Naive thymus-derived CD4-positive, alpha-beta T cell (primary cell): ENCODE measurements at regions of chr22 and their contacts with region 1.

Region 1: GRCh38 chr22:38181453-38182247 is at the start of gene PLA2G6:
- DNase-seq: peak; percentile 86 to 99 (median 90)
- ATAC-seq: peak; percentile 96
- H3K4me3 ChIP-seq: peak within 1 kb of the TSS; percentile 90
- H3K4me3 Mint-ChIP-seq: peak within 1 kb of the TSS; percentile 88 to 100 (median 94)
- H3K27ac ChIP-seq: peak within 1 kb of the TSS; percentile 67
- H3K27ac Mint-ChIP-seq: peak within 1 kb of the TSS; percentile 36 to 94 (median 89)
- H3K4me1 ChIP-seq: peaks cover 16 to 30% of the 10 kb centered on the region in 2 donors
- H3K4me1 Mint-ChIP-seq: peaks cover 34 to 50% (median 42%) of the 10 kb centered on the region in 7 donors
- H3K27me3 ChIP-seq: no peaks in the 10 kb centered on the region
- H3K27me3 Mint-ChIP-seq: peaks cover 0 to 14% (median 0%) of the 10 kb centered on the region in 5 donors
- total RNA-seq, gene PLA2G6: 66.5 to 252 (median 105) TPM

Region 2: DNA sequence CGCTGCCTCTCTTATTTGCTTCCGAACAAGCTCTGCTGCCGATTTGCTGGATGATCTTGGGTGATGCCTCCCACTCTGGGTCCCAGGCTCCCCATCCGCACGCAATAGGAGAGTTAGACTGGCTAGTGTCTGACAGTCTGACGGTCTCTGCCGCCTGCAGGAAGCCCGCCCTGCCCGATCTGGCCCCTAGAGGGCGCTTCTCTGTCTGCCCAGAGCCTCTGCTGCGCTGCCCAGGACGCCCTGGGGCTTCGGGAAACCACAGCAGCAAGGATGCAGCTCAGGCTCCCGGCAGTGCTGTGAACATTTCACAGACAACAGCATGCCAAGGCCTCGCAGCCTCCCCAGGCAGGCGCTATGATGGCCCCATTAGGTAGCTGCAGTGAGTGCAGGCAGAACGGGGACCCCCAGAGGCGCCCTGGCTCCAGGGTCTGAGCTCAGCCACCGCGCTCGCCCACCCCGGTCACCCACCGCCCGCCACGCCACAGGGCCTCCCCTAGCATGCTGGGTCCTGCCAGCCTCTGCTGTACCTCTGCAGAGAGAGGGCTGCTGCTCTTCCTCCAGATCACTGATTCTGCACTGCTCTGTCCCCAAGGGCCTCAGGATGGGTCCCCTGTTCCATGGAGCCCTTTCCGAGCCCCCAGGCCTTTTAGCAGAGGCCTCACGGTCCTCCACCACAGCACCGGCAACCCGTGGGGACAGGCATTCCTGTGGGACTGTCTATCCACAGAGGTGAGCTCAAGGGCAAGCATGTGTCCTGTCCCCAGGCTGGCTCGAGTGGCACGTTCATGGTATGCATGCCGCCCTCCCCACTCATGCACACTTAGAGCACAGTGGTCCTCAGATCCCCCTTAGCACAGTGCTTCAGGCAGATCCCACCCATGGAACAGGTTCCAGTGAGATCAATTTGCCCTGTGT is 66.9 kb before region 1 on chr22:
- CTCF ChIA-PET with region 1: interaction called, 3 read pairs
- POLR2A ChIA-PET with region 1: no interaction called
- intact Hi-C with region 1: loop called in 1 of 2 experiments (anchors 5 kb)
- DNase-seq: peak; percentile 42 to 83 (median 67)
- ATAC-seq: peak; percentile 92
- H3K4me3 ChIP-seq: no peak overlapping the region
- H3K4me3 Mint-ChIP-seq: peak overlapping the region in 1 of 10 donors; percentile 41
- H3K27ac ChIP-seq: no peak overlapping the region
- H3K27ac Mint-ChIP-seq: peak overlapping the region in 2 of 9 donors; percentile 57 to 81
- H3K4me1 ChIP-seq: no peaks in the 10 kb centered on the region
- H3K4me1 Mint-ChIP-seq: peaks cover 0 to 6% (median 4%) of the 10 kb centered on the region in 7 donors
- H3K27me3 ChIP-seq: no peaks in the 10 kb centered on the region
- H3K27me3 Mint-ChIP-seq: no peaks in the 10 kb centered on the region

Region 3: GRCh38 chr22:38214256-38215056 is 32.8 kb after region 1 on chr22:
- CTCF ChIA-PET with region 1: interaction called, 4 read pairs
- POLR2A ChIA-PET with region 1: interaction called, 3 read pairs
- intact Hi-C with region 1: loop called in 1 of 2 experiments (anchors 1 kb)
- DNase-seq: peak; percentile 54 to 78 (median 69)
- ATAC-seq: peak; percentile 82
- H3K4me3 ChIP-seq: peak overlapping the region; percentile 30
- H3K4me3 Mint-ChIP-seq: peak overlapping the region in 9 of 10 donors; percentile 9 to 76 (median 69)
- H3K27ac ChIP-seq: peak overlapping the region; percentile 39
- H3K27ac Mint-ChIP-seq: peak overlapping the region in 3 of 9 donors; percentile 44 to 77 (median 57)
- H3K4me1 ChIP-seq: peaks cover 6 to 12% of the 10 kb centered on the region in 2 donors
- H3K4me1 Mint-ChIP-seq: peaks cover 11 to 30% (median 15%) of the 10 kb centered on the region in 7 donors
- H3K27me3 ChIP-seq: no peaks in the 10 kb centered on the region
- H3K27me3 Mint-ChIP-seq: no peaks in the 10 kb centered on the region

Region 4: DNA sequence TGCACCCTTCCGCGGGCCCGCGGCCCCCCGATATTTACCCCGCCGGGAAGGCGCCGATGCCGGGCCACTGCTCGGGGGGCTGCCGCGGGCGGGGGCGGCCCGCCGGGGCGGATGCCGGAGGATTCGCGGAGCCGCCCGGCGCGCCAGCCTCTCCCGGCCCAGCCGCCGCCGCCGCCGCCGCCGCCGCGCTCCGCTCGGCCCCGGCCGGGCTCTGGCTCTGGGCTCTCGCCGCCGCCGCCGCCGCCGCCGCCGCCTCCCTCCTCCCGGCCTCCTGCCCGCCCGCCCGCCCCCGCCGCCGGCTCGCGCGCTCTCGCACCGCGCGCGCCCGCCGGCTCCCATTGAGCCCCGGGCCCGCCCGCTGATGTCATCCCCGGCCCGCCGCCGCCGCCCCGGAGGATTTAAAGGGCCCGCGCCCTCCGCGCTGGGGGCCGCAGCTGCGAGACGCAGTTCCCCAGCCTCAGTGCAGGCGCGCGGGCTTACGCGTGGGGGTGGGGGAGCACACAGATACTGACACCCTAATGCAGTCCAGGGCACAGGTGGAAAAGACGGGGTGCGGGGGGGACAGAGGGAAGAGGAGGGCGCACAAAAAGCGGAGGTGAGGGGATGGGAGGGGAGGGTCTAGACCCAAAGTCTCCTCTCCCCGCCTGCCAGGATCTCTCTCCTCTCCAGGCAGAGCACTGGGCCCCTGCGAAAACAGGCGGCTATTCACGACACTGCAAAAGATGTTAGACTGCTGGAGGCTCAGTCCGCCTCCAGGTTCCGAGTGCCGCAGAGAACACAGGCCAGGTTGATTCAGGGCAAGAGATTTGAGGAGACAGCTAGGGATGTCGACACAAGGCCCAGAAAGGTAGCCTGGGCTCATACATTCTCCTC is 135.7 kb after region 1 on chr22 and contains the start of gene CSNK1E:
- CTCF ChIA-PET with region 1: no interaction called
- POLR2A ChIA-PET with region 1: no interaction called
- intact Hi-C with region 1: loop called in 1 of 2 experiments (anchors 2 kb)
- DNase-seq: peak; percentile 67 to 85 (median 74)
- ATAC-seq: peak; percentile 79
- H3K4me3 ChIP-seq: peak within 1 kb of the TSS; percentile 62
- H3K4me3 Mint-ChIP-seq: peak within 1 kb of the TSS; percentile 84 to 92 (median 89)
- H3K27ac ChIP-seq: peak within 1 kb of the TSS; percentile 91
- H3K27ac Mint-ChIP-seq: peak within 1 kb of the TSS; percentile 94 to 97 (median 95)
- H3K4me1 ChIP-seq: peaks cover 28 to 39% of the 10 kb centered on the region in 2 donors
- H3K4me1 Mint-ChIP-seq: peaks cover 31 to 49% (median 42%) of the 10 kb centered on the region in 7 donors
- H3K27me3 ChIP-seq: no peaks in the 10 kb centered on the region
- H3K27me3 Mint-ChIP-seq: no peaks in the 10 kb centered on the region
- total RNA-seq, gene CSNK1E: 71.6 to 143 (median 91.9) TPM